ENCODE measurements at regions of chr20 and their contacts with region 1.

Region 1: GRCh38 chr20:36344517-36345136 is 38.5 kb downstream of the DLGAP4 start:
- DNase-seq: peak; percentile 41
- H3K4me3 ChIP-seq: no peak overlapping the region
- H3K27ac ChIP-seq: no peak overlapping the region
- H3K4me1 ChIP-seq: no peaks in the 10 kb centered on the region
- H3K27me3 ChIP-seq: no peaks in the 10 kb centered on the region
- CTCF ChIP-seq: no peak

Region 2: GRCh38 chr20:36093025-36093803 is 251.4 kb before region 1 on chr20:
- CTCF ChIA-PET with region 1: no interaction called
- dilution Hi-C with region 1: no loop called
- in situ Hi-C with region 1: no loop called
- intact Hi-C with region 1: no loop called
- DNase-seq: peak; percentile 44
- H3K4me3 ChIP-seq: peak overlapping the region; percentile 44 to 93 (median 72)
- H3K27ac ChIP-seq: no peak overlapping the region
- H3K4me1 ChIP-seq: peaks cover 45% of the 10 kb centered on the region
- H3K27me3 ChIP-seq: no peaks in the 10 kb centered on the region
- CTCF ChIP-seq: no peak

Region 3: DNA sequence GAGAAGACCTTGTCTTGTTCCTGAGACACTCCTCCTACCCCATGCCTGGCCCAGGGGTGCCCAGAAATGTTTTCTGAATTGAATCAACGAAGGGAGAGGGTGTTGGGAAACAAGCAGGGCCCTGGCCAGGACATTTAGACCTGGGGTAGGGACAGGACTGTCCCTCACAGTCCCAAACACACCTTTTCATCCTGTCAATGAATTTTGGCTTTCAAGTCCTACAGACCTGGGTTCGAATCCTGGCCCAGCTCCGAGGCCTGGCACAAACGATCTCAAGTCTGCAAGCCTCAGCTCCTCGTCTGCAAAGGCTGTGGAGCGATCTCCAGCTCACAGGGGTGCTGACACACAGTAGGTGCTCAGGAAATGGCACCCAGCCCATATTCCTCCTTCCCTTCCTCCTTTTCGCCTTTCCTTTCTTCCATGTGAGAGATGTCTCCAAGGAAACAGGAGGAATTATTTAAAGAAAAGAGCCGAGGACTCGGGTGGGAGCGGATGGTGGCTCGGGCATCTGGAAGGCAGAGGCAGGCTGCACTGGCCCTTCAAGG is 45.8 kb before region 1 on chr20:
- CTCF ChIA-PET with region 1: no interaction called
- dilution Hi-C with region 1: loop called (anchors 5 kb)
- in situ Hi-C with region 1: no loop called
- intact Hi-C with region 1: no loop called
- DNase-seq: no peak
- H3K4me3 ChIP-seq: no peak overlapping the region
- H3K27ac ChIP-seq: no peak overlapping the region
- H3K4me1 ChIP-seq: no peaks in the 10 kb centered on the region
- H3K27me3 ChIP-seq: peaks cover 3% of the 10 kb centered on the region
- CTCF ChIP-seq: no peak

Region 4: GRCh38 chr20:36399147-36399968 is 54.7 kb after region 1 on chr20:
- CTCF ChIA-PET with region 1: no interaction called
- dilution Hi-C with region 1: no loop called
- in situ Hi-C with region 1: no loop called
- intact Hi-C with region 1: no loop called
- DNase-seq: peak; percentile 53
- H3K4me3 ChIP-seq: no peak overlapping the region
- H3K27ac ChIP-seq: no peak overlapping the region
- H3K4me1 ChIP-seq: no peaks in the 10 kb centered on the region
- H3K27me3 ChIP-seq: peaks cover 4% of the 10 kb centered on the region
- CTCF ChIP-seq: peak; percentile 42 to 44

Region 5: DNA sequence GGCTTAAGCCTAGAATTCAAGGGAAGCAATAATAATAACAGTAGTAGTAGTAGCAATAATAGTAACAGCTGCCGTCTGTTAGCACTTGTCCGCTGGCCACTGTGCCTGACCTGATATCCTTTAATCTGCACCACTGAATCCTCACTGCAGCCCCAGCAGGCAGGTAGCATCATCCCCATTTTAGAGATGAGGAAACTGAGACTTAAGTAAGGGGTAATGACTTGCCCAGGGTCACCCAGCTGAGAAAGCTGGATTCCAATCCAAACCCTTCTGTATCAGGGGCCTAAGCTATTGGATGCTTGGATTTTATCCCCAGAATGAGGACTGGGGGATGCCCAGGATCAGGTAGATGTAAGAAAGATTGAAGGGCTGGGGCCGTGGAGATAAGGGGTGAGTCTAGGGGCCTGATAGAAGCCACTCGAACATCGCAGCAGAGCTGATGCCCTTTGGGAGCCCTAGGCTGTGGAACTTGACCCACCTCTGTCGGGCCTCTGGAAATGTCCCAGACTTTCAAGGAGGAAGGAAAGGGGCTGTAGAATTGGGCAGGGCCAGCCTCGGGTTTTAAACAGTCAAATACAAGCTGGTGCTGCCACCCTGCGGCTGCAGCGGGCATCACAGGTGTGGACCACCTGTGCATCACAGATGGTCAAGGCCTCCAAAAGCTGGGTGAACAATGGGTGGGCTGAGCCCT is 94.6 kb after region 1 on chr20:
- CTCF ChIA-PET with region 1: no interaction called
- dilution Hi-C with region 1: no loop called
- in situ Hi-C with region 1: no loop called
- intact Hi-C with region 1: no loop called
- DNase-seq: peak; percentile 37
- H3K4me3 ChIP-seq: no peak overlapping the region
- H3K27ac ChIP-seq: no peak overlapping the region
- H3K4me1 ChIP-seq: no peaks in the 10 kb centered on the region
- H3K27me3 ChIP-seq: no peaks in the 10 kb centered on the region
- CTCF ChIP-seq: peak; percentile 86 to 87